Sigmoid colon (tissue), 7 donors: ENCODE measurements at regions of chr3 and their contacts with region 1.

Region 1: DNA sequence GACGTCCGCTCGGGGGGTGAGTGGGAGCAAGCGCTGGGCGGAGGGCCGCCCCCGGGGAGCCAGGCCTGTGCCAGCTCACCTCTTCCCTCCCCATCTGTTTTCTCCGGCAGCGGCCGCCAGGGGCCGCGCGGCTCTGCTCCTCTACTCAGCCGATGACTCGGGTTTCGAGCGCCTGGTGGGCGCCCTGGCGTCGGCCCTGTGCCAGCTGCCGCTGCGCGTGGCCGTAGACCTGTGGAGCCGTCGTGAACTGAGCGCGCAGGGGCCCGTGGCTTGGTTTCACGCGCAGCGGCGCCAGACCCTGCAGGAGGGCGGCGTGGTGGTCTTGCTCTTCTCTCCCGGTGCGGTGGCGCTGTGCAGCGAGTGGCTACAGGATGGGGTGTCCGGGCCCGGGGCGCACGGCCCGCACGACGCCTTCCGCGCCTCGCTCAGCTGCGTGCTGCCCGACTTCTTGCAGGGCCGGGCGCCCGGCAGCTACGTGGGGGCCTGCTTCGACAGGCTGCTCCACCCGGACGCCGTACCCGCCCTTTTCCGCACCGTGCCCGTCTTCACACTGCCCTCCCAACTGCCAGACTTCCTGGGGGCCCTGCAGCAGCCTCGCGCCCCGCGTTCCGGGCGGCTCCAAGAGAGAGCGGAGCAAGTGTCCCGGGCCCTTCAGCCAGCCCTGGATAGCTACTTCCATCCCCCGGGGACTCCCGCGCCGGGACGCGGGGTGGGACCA is 632 bp upstream of the CRELD1 start:
- DNase-seq: peak; percentile 95
- H3K4me3 ChIP-seq: peak overlapping the region; percentile 57 to 80 (median 62)
- H3K27ac ChIP-seq: peak overlapping the region; percentile 94 to 99 (median 96)
- H3K4me1 ChIP-seq: peaks cover 0 to 40% (median 35%) of the 10 kb centered on the region in 4 donors
- H3K27me3 ChIP-seq: no peaks in the 10 kb centered on the region
- CTCF ChIP-seq: peak; percentile 74 to 84 (median 82)
- EP300 ChIP-seq: no peak
- POLR2A ChIP-seq: no peak

Region 2: GRCh38 chr3:9731206-9732079 is 201.6 kb before region 1 on chr3 and contains the start of gene BRPF1:
- intact Hi-C with region 1: loop called (anchors 1 kb)
- DNase-seq: peak; percentile 100
- H3K4me3 ChIP-seq: peak within 1 kb of the TSS; percentile 95 to 100 (median 98)
- H3K27ac ChIP-seq: peak within 1 kb of the TSS; percentile 87 to 98 (median 94)
- H3K4me1 ChIP-seq: peaks cover 0 to 32% (median 29%) of the 10 kb centered on the region in 4 donors
- H3K27me3 ChIP-seq: no peaks in the 10 kb centered on the region
- CTCF ChIP-seq: no peak
- EP300 ChIP-seq: peak in 1 of 4 donors; percentile 6
- POLR2A ChIP-seq: peak; percentile 47 to 51
- total RNA-seq, gene BRPF1: 12.6 to 18.6 (median 13.9) TPM

Region 3: DNA sequence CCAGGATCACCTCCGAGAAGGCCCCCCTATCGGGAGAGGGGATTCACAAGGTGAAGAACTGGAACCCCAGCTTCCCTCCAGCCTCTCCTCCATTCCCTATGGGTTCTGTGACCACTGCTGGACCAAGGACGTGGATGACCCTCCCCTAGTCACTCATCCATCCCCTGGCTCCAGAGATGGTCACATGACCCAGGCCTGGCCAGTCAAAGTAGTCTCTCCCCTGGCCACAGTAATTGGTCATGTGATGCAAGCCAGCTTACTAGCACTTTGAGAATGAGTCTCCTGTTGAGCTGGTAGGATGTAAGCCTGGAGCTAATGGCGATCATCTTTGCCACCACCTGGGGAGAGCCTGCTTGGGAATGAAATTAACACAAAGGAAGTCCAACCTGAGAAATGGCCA is 167.1 kb before region 1 on chr3:
- intact Hi-C with region 1: no loop called
- DNase-seq: no peak
- H3K4me3 ChIP-seq: no peak overlapping the region
- H3K27ac ChIP-seq: no peak overlapping the region
- H3K4me1 ChIP-seq: peaks cover 0 to 38% (median 31%) of the 10 kb centered on the region in 4 donors
- H3K27me3 ChIP-seq: no peaks in the 10 kb centered on the region
- CTCF ChIP-seq: no peak
- EP300 ChIP-seq: no peak
- POLR2A ChIP-seq: no peak

Region 4: DNA sequence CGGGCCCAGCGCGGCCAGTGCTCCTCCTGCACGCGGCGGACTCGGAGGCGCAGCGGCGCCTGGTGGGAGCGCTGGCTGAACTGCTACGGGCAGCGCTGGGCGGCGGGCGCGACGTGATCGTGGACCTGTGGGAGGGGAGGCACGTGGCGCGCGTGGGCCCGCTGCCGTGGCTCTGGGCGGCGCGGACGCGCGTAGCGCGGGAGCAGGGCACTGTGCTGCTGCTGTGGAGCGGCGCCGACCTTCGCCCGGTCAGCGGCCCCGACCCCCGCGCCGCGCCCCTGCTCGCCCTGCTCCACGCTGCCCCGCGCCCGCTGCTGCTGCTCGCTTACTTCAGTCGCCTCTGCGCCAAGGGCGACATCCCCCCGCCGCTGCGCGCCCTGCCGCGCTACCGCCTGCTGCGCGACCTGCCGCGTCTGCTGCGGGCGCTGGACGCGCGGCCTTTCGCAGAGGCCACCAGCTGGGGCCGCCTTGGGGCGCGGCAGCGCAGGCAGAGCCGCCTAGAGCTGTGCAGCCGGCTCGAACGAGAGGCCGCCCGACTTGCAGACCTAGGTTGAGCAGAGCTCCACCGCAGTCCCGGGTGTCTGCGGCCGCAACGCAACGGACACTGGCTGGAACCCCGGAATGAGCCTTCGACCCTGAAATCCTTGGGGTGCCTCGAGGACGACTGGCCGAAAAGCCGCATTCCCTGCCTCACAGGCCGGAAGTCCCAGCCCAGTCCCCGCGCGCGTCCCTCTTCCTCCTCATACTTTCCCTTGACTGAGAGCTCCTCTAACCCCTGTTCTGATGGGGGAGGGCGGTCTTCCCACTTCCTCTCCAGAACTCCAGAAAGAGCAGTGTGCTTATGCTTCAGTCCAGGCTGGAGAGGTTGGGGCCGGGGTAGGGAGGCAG is 17.5 kb before region 1 on chr3:
- intact Hi-C with region 1: loop called (anchors 2 kb)
- DNase-seq: peak; percentile 91
- H3K4me3 ChIP-seq: peak overlapping the region; percentile 47 to 83 (median 68)
- H3K27ac ChIP-seq: peak overlapping the region; percentile 83 to 98 (median 96)
- H3K4me1 ChIP-seq: peaks cover 0 to 56% (median 47%) of the 10 kb centered on the region in 4 donors
- H3K27me3 ChIP-seq: no peaks in the 10 kb centered on the region
- CTCF ChIP-seq: peak in 3 of 4 experiments; percentile 47 to 61 (median 52)
- EP300 ChIP-seq: no peak
- POLR2A ChIP-seq: peak; percentile 18 to 41

Region 5: GRCh38 chr3:10026084-10026890 is 93.3 kb after region 1 on chr3 and contains the start of gene FANCD2:
- intact Hi-C with region 1: loop called (anchors 5 kb)
- DNase-seq: peak; percentile 92
- H3K4me3 ChIP-seq: peak within 1 kb of the TSS; percentile 73 to 93 (median 83)
- H3K27ac ChIP-seq: peak within 1 kb of the TSS; percentile 77 to 85 (median 81)
- H3K4me1 ChIP-seq: peaks cover 0 to 28% (median 25%) of the 10 kb centered on the region in 4 donors
- H3K27me3 ChIP-seq: no peaks in the 10 kb centered on the region
- CTCF ChIP-seq: no peak
- EP300 ChIP-seq: peak in 1 of 4 donors; percentile 60
- POLR2A ChIP-seq: peak; percentile 74 to 78
- total RNA-seq, gene FANCD2: 1.5 to 5.8 (median 3.1) TPM

Region 6: GRCh38 chr3:10115326-10116137 is 182.5 kb after region 1 on chr3 and contains the start of gene BRK1:
- intact Hi-C with region 1: loop called (anchors 5 kb)
- DNase-seq: peak; percentile 97
- H3K4me3 ChIP-seq: peak within 1 kb of the TSS; percentile 50 to 93 (median 75)
- H3K27ac ChIP-seq: peak within 1 kb of the TSS; percentile 75 to 87 (median 82)
- H3K4me1 ChIP-seq: peaks cover 0 to 32% (median 26%) of the 10 kb centered on the region in 4 donors
- H3K27me3 ChIP-seq: no peaks in the 10 kb centered on the region
- CTCF ChIP-seq: no peak
- EP300 ChIP-seq: no peak
- POLR2A ChIP-seq: peak; percentile 81 to 86
- total RNA-seq, gene BRK1: 111 to 239 (median 152) TPM

Region 7: GRCh38 chr3:10142707-10143566 is 209.9 kb after region 1 on chr3:
- intact Hi-C with region 1: loop called (anchors 5 kb)
- DNase-seq: no peak
- H3K4me3 ChIP-seq: peak overlapping the region; percentile 53 to 77 (median 65)
- H3K27ac ChIP-seq: peak overlapping the region; percentile 92 to 95 (median 94)
- H3K4me1 ChIP-seq: peaks cover 0 to 41% (median 31%) of the 10 kb centered on the region in 4 donors
- H3K27me3 ChIP-seq: no peaks in the 10 kb centered on the region
- CTCF ChIP-seq: no peak
- EP300 ChIP-seq: no peak
- POLR2A ChIP-seq: no peak